GM13976 (cell line): ENCODE measurements at regions of chr21 and their contacts with region 1.

Region 1: DNA sequence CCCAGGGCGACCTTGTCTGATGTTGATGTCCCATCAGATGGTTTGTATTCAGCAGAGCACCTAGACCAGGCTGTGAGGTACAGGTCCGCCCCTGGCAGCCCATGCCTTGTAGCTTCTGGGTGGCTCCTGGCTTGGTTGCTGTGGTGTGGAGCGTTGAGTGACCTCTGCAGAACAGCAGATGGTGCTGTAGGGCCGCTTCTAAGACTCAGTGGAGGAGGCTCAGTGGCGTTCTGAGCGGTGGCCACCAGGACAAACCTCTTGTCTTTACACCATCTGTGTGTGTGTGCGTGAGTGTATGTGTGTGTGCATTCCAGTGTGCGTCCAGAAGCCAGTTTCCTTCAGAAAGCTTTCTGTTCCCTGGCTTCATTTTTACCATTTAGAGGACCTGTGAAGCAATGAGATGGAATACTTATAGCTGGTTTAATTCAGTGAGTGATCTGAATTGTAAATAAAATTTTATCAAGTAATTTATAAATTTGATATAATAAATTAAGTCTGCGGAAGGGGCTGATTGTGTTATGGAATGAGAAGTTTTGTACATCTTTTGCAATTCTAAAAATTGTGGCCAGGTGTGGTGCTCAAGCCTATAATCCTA is 66.1 kb downstream of the ADARB1 start:
- DNase-seq: peak; percentile 88
- CTCF ChIP-seq: peak; percentile 82

Region 2: GRCh38 chr21:44939532-44940115 is 200.8 kb before region 1 on chr21 and contains the start of gene SLX9:
- in situ Hi-C with region 1: loop called (anchors 10 kb)
- DNase-seq: peak; percentile 95
- CTCF ChIP-seq: no peak

Region 3: DNA sequence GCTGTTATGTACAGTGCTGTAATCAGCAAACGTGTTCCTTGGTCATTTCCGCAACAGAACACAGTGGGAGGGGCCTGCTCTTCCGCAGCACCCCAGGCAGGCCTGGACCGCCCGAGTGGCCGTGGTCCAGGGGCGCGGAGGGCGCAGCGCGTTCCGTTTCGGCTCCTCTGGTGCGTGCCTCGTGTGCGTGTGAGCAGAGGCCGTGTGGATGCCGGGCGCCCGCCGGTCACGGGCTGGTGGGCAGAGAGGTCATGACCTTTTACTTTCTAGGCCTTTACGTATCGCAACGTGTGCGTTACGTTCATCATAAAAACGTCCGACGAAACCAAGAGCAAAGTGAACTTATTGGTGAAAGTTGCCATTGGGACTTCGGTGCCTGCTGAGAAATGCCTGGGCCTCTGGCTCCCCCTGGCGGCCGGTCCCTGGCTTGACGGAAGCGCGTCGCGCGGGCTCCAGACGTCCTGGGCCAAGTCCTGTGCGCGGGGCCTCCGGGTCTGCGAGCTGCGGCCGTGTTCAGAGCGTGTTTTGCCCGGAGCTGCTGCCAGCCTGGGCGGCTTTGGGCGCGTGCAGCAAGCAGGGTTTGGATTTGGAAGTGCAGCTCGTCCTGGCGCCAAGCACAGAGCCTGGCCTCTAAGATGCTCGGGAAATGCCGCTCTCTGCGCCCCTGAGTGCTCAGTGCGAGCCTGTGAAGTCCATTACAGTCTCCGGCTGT is 298.9 kb after region 1 on chr21:
- in situ Hi-C with region 1: loop called (anchors 25 kb)
- DNase-seq: peak; percentile 95
- CTCF ChIP-seq: peak; percentile 90